Prostate gland (tissue), 2 donors: ENCODE measurements at regions of chr5 and their contacts with region 1.

Region 1: DNA sequence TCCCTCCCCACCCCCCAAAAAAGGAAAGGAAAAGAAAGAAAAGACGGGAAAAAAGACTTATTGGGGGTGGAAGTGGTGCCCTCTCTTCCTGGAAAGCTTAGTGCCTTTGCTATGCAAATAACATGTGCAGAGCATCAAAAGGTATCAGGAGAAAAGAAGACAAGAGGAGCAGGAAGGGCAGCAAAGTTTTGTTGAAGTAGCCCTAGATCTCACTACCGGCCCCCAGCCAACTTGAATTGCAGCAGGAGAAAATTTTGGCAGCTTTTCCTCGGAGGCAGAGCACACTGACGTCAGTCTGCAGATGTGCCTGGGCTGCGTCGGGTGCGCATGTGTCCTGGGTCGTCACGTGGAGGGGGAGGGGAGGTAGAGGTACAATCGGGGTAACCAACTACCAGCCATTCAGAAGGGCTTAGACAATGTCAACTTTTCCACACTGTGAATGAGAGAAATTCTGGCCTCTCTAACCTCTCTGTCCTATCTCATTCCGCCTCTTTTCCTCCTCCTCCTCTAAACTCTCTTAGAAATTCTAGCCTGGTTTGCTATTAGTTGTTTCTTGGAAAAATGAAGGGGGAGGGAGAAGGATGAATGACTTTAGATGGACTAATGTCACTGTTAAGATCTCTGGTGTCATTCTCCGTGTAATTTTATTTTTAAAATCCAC is at the start of gene ADAMTS6:
- DNase-seq: peak; percentile 88
- H3K4me3 ChIP-seq: peak within 1 kb of the TSS; percentile 30 to 44
- H3K27ac ChIP-seq: peak within 1 kb of the TSS; percentile 87 to 93
- H3K4me1 ChIP-seq: peaks cover 2% of the 10 kb centered on the region
- H3K27me3 ChIP-seq: no peaks in the 10 kb centered on the region
- CTCF ChIP-seq: no peak
- POLR2A ChIP-seq: no peak
- total RNA-seq, gene ADAMTS6: 0.91 to 20.7 TPM

Region 2: GRCh38 chr5:64634997-64635686 is 846.6 kb before region 1 on chr5:
- intact Hi-C with region 1: loop called (anchors 5 kb)
- DNase-seq: no peak
- H3K4me3 ChIP-seq: no peak overlapping the region
- H3K27ac ChIP-seq: no peak overlapping the region
- H3K4me1 ChIP-seq: no peaks in the 10 kb centered on the region
- H3K27me3 ChIP-seq: no peaks in the 10 kb centered on the region
- CTCF ChIP-seq: peak; percentile 73 to 86 (median 78)
- POLR2A ChIP-seq: no peak

Region 3: DNA sequence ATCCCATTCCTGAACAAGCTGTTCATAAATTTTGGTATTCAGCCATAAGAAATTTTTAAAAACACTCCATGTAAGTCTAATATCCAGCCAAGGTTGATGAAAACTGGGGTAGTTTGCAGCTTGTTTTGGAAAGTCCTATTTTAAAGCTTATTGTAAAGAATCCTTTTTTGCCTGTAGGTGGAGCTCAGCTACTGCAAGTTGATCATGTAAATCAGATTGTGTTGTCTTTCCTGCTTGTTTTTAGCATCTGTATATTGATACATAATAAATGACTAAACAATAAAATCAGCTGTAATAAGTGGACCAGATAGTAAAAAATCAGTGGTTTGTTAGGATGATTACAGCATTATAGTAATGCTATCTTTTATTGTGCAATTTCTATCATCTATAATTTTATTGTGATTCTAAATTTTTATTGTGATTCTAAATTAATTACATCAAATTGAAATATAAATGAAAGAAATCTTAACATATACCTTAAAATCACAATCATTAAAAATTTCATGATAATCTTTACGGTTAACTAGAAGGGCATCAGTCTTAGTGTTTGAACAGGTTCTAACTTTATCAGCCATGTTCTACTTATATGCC is 670.6 kb before region 1 on chr5:
- intact Hi-C with region 1: loop called (anchors 2 kb)
- DNase-seq: no peak
- H3K4me3 ChIP-seq: no peak overlapping the region
- H3K27ac ChIP-seq: no peak overlapping the region
- H3K4me1 ChIP-seq: no peaks in the 10 kb centered on the region
- H3K27me3 ChIP-seq: no peaks in the 10 kb centered on the region
- CTCF ChIP-seq: peak in 3 of 4 experiments; percentile 47 to 71 (median 69)
- POLR2A ChIP-seq: no peak

Region 4: DNA sequence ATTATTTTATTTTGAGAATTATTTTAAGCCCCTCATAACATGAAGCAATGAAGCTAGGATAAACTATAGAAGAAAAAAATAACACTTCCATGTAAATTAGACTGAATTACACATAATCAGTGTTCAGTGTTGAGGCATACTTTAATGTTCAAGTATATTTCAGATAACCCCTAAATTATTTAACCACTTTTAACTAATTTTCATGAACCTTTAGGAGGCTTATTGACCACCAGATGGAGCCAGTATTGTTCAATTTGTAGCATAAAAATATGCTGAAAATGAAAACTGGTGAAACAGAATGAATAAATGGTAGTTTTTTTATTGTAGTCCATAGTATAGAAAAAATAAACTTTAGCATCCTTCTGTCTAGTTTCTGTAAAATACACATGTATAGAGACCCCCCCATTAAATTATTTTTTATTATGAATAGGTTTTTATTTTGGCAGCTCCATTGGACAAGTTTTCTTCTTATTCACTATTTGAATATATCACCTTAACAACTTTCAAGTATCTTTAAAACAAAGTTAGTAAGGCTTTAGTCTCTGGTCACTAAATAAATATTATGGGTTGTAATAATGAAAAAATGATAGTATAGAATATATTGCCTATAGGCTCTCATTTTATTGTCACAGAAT is 522.9 kb before region 1 on chr5:
- intact Hi-C with region 1: loop called (anchors 5 kb)
- DNase-seq: no peak
- H3K4me3 ChIP-seq: no peak overlapping the region
- H3K27ac ChIP-seq: no peak overlapping the region
- H3K4me1 ChIP-seq: no peaks in the 10 kb centered on the region
- H3K27me3 ChIP-seq: no peaks in the 10 kb centered on the region
- CTCF ChIP-seq: peak in 2 of 4 experiments; percentile 45 to 48
- POLR2A ChIP-seq: no peak

Region 5: GRCh38 chr5:65102828-65103711 is 378.7 kb before region 1 on chr5:
- intact Hi-C with region 1: loop called (anchors 2 kb)
- DNase-seq: peak; percentile 49
- H3K4me3 ChIP-seq: peak overlapping the region; percentile 47 to 54
- H3K27ac ChIP-seq: peak overlapping the region; percentile 82 to 85
- H3K4me1 ChIP-seq: no peaks in the 10 kb centered on the region
- H3K27me3 ChIP-seq: no peaks in the 10 kb centered on the region
- CTCF ChIP-seq: peak in 3 of 4 experiments; percentile 15 to 23 (median 22)
- POLR2A ChIP-seq: no peak